ENCODE measurements at regions of chr7 and their contacts with region 1.

Region 1: DNA sequence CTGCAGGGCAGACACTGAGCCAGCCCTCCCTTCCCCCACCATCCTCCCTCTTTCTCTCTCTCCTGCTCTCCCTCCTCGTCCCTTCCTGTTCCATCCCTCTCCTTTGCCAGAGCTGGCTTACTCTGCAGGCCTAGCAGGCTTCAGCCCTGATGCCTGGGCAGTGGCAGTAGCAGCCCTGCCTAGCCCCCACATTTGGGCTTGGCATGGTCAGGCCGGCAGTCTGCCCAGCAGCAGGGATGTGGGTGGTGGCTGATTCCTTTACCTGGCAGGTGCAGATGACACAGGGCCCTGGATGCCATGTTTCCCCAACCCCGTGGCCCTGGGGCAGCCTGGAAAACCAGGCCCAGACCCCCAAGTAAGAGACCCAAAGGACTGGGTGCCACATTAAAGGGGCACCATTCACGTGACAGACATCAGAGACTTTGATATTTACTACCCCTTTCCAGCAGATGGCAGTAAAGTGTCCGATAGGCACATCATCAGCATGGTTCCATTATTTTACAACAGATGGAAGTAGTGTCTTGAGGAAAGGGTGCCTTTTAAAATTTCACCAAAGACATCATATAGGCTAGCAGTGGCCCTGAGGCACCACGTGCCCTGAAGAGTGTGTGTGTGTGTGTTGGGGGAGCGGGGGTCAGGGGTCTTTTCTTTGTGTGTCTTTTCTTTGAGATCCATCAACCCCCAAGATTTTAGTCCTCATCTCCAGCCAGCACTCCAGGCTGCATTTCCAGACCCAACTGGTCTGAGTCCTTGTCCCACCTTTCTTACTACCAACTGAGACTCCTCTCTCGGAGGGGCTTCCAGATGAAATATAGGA is 5.9 kb downstream of the KCP start:
- DNase-seq: no peak
- ATAC-seq: peak; percentile 49 to 85 (median 63)
- H3K4me3 ChIP-seq: no peak overlapping the region
- H3K27ac ChIP-seq: no peak overlapping the region
- H3K4me1 ChIP-seq: no peaks in the 10 kb centered on the region
- H3K27me3 ChIP-seq: peaks cover 0 to 24% (median 10%) of the 10 kb centered on the region in 3 donors
- CTCF ChIP-seq: peak; percentile 66

Region 2: GRCh38 chr7:129091484-129092002 is 187.0 kb after region 1 on chr7:
- intact Hi-C with region 1: loop called (anchors 1 to 2 kb)
- DNase-seq: peak; percentile 78 to 86
- ATAC-seq: peak; percentile 83 to 97 (median 93)
- H3K4me3 ChIP-seq: no peak overlapping the region
- H3K27ac ChIP-seq: no peak overlapping the region
- H3K4me1 ChIP-seq: no peaks in the 10 kb centered on the region
- H3K27me3 ChIP-seq: no peaks in the 10 kb centered on the region
- CTCF ChIP-seq: peak; percentile 95

Measured in psoas muscle (tissue), 8 donors.